ENCODE measurements at regions of chr10 and their contacts with region 1.

Region 1: DNA sequence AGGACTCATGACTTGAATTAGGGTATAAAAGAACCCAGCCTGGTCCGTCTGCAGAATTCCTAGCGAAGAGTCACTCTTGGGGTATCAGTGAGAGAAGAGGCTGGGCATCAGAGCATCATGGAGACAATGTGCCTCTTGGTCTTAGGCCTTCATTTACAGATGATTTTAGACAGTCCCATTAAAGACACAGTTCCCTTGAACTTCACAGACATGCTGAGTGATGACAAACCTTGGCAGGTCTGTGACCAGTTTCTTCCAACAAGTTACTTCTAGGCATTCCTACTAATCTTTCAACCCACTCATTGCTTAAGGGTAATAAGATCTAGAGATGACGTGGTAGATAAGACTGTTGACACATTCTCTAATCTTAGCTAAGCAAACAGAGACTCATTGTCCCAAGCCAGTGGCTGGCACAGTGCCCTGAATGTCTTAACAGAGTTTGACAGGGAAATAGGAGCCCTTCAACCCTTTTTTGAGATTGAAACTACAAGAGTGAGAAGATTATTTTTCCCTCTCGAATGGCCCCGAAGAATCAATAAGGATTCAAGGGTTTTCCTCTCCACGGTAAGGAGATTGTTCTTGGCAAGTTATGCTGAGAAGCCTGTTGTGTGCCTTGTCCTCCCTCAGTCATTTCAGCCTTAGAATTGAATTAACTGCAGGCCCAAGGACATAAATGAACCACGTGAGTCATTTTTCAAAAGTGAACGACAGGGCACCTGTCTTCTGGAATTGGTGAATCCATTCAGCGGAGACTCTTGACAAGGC is 281.1 kb downstream of the CCDC3 start:
- DNase-seq: peak; percentile 94 to 95
- ATAC-seq: peak; percentile 84
- H3K4me3 ChIP-seq: no peak overlapping the region
- H3K27ac ChIP-seq: peak overlapping the region; percentile 52 to 86
- H3K4me1 ChIP-seq: peaks cover 7 to 8% of the 10 kb centered on the region in 2 donors
- H3K27me3 ChIP-seq: no peaks in the 10 kb centered on the region

Region 2: GRCh38 chr10:12333380-12334185 is 386.8 kb before region 1 on chr10:
- intact Hi-C with region 1: no loop called
- DNase-seq: peak; percentile 90 to 91
- ATAC-seq: peak; percentile 91
- H3K4me3 ChIP-seq: no peak overlapping the region
- H3K27ac ChIP-seq: peak overlapping the region; percentile 97 to 99
- H3K4me1 ChIP-seq: peaks cover 0 to 6% of the 10 kb centered on the region in 2 donors
- H3K27me3 ChIP-seq: no peaks in the 10 kb centered on the region

Region 3: DNA sequence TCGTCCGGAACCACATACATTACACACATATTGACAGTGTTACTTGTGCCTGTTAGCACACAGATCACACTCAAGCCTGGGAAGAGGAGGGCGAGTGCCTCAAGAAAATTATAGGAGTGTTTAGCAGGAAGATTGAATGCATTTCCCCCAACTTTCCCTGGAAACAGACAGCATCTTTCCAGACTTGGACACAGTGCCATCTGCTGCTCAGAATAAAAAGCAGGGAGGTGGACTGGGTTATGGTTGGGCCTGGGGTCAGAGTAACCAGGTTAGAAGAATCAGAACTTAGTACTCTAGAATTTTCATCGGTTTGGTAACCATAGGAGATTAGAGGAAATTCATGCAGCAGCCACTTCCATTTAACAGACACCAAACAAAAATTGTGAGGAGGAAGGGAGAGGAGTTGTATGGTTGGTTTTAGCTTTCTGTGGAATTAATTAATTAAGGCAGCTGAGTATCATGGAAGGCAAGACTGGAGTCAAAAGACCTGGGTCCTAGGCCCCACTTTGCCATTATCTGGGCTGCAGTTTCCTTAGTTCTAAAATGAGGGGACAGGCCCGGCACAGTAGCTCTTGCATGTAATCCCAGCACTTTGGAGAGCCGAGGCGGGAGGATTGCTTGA is 336.2 kb after region 1 on chr10:
- intact Hi-C with region 1: loop called in 1 of 2 experiments (anchors 5 kb)
- DNase-seq: no peak
- ATAC-seq: no peak
- H3K4me3 ChIP-seq: no peak overlapping the region
- H3K27ac ChIP-seq: no peak overlapping the region
- H3K4me1 ChIP-seq: no peaks in the 10 kb centered on the region
- H3K27me3 ChIP-seq: no peaks in the 10 kb centered on the region

Region 4: GRCh38 chr10:13074561-13075451 is 354.4 kb after region 1 on chr10:
- intact Hi-C with region 1: loop called in 1 of 2 experiments (anchors 5 kb)
- DNase-seq: peak; percentile 76 to 90
- ATAC-seq: peak; percentile 76
- H3K4me3 ChIP-seq: no peak overlapping the region
- H3K27ac ChIP-seq: no peak overlapping the region
- H3K4me1 ChIP-seq: no peaks in the 10 kb centered on the region
- H3K27me3 ChIP-seq: no peaks in the 10 kb centered on the region